Colonic mucosa (tissue), 4 donors: ENCODE measurements at regions of chr6 and their contacts with region 1.

Region 1: DNA sequence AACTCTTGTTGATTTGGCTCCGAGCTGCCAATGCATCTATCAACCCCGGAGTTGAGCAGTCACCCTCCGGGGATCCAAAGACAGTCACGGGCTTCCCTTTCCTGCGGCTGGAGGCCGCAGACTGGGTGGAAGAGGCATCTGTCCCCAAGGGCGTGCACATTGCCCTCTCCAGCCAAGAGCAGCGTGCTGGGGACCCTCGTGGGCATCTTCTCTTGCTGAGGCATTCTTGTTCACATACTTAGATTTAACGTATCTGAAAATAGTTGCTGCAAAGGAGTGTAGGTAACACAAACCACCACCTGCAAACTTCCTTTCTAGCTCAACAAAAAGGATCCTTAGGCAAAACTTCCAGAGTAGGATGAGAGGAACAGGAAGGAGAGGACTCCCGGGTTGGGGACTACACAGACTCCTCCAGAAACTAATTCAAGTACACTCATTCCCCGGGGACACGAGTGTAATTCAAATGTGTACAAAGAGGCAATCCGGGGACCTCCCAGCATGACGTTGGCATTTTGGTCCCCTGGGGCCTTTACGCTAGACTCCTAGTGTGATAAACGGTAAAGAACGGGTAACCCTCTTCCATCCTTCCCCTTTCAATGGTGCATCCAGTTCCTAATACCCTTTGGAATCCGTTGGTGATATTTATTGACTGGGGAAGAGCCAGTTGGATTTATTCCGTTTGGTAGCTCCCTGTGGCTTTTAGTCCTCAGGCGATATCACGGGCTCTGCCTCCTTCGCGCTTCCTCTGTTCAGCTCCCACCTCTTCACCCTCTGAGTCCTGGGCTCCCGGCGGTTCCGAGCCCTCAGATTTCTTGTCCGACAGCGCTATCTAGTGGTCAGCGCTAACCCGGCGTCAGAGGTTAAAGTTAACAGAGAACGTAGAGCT is 2.7 kb upstream of the COL12A1 start:
- DNase-seq: peak; percentile 85
- H3K4me3 ChIP-seq: no peak overlapping the region
- H3K27ac ChIP-seq: no peak overlapping the region
- H3K4me1 ChIP-seq: peaks cover 5% of the 10 kb centered on the region
- H3K27me3 ChIP-seq: peaks cover 42% of the 10 kb centered on the region
- CTCF ChIP-seq: peak; percentile 86

Region 2: GRCh38 chr6:73739096-73739495 is 1469.4 kb before region 1 on chr6:
- intact Hi-C with region 1: loop called (anchors 2 kb)
- DNase-seq: no peak
- H3K4me3 ChIP-seq: no peak overlapping the region
- H3K27ac ChIP-seq: no peak overlapping the region
- H3K4me1 ChIP-seq: no peaks in the 10 kb centered on the region
- H3K27me3 ChIP-seq: no peaks in the 10 kb centered on the region
- CTCF ChIP-seq: peak; percentile 76

Region 3: GRCh38 chr6:73854998-73855718 is 1353.4 kb before region 1 on chr6:
- intact Hi-C with region 1: loop called (anchors 5 kb)
- DNase-seq: peak; percentile 23
- H3K4me3 ChIP-seq: no peak overlapping the region
- H3K27ac ChIP-seq: no peak overlapping the region
- H3K4me1 ChIP-seq: no peaks in the 10 kb centered on the region
- H3K27me3 ChIP-seq: no peaks in the 10 kb centered on the region
- CTCF ChIP-seq: peak; percentile 71

Region 4: GRCh38 chr6:74091136-74091793 is 1117.3 kb before region 1 on chr6:
- intact Hi-C with region 1: loop called (anchors 10 kb)
- DNase-seq: no peak
- H3K4me3 ChIP-seq: no peak overlapping the region
- H3K27ac ChIP-seq: no peak overlapping the region
- H3K4me1 ChIP-seq: no peaks in the 10 kb centered on the region
- H3K27me3 ChIP-seq: no peaks in the 10 kb centered on the region
- CTCF ChIP-seq: peak; percentile 64

Region 5: DNA sequence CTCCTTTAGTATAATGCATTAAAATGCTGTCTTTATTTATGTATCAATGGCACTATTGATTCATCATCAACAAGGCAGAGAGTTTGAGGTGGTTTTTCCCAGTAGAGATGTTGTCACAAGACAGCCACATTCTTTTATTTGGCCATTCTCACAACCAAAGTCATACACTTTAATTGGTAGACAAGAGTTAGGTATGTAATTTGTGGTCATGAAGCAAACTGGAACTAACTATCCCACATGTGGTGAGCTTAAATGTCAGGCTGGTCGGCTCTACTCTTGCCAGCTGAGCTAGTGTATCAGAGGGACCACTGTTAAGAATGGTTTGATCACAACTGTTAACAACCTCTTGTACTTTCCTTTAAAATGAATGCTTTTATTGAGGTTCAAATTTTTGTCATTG is 797.9 kb before region 1 on chr6:
- intact Hi-C with region 1: loop called (anchors 5 kb)
- DNase-seq: no peak
- H3K4me3 ChIP-seq: no peak overlapping the region
- H3K27ac ChIP-seq: no peak overlapping the region
- H3K4me1 ChIP-seq: no peaks in the 10 kb centered on the region
- H3K27me3 ChIP-seq: no peaks in the 10 kb centered on the region
- CTCF ChIP-seq: no peak

Region 6: DNA sequence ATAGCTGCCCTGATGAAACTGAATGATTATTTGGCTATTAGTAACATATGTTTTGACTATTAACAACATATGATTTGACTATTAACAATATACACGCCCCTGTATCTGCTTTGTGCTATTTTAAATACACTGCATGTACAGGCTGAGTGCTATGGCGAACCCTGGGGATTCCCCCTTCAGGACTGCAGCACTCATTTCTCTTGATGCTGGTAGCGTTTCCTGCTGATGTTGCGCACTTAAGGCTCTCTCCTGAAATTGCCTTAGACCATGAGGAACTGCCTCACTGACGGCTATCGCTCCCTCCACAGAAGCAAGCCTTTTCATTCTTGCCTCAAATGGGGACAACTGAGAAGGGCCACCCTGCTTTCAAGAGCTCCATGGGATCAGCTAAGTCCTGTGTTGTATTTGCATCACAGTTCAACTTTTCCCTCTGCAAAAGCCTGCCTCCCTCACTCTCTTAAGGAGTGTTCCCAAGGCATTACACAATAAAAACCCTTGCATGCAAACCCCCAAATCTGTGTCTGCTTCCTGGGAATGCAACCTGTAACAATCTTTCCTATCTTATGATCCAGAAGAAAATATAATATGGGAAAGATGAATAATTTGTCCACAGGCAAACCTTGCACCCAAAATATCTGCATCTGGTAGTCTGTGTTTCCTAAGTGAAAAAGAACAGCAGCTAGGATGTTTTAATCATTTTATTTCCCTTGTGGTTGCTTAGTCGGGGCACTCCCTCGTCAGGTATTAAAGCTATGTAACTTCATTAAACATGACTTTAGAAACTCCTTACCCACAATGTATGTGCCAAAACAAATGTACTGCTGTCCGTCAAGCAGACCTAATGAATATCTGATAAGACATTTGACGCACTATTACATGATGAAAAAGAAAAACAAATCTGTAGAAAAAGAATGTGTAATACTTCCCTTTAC is 459.1 kb before region 1 on chr6:
- intact Hi-C with region 1: loop called (anchors 5 kb)
- DNase-seq: no peak
- H3K4me3 ChIP-seq: no peak overlapping the region
- H3K27ac ChIP-seq: no peak overlapping the region
- H3K4me1 ChIP-seq: no peaks in the 10 kb centered on the region
- H3K27me3 ChIP-seq: no peaks in the 10 kb centered on the region
- CTCF ChIP-seq: no peak